Activated CD4-positive, alpha-beta T cell treated with anti-CD3 and anti-CD28 coated beads, Interleukin-2, amount 10 ng/mL, durations not matched to agents 24 days and 14 days (primary cell): ENCODE measurements at regions of chr1 and their contacts with region 1.

Region 1: DNA sequence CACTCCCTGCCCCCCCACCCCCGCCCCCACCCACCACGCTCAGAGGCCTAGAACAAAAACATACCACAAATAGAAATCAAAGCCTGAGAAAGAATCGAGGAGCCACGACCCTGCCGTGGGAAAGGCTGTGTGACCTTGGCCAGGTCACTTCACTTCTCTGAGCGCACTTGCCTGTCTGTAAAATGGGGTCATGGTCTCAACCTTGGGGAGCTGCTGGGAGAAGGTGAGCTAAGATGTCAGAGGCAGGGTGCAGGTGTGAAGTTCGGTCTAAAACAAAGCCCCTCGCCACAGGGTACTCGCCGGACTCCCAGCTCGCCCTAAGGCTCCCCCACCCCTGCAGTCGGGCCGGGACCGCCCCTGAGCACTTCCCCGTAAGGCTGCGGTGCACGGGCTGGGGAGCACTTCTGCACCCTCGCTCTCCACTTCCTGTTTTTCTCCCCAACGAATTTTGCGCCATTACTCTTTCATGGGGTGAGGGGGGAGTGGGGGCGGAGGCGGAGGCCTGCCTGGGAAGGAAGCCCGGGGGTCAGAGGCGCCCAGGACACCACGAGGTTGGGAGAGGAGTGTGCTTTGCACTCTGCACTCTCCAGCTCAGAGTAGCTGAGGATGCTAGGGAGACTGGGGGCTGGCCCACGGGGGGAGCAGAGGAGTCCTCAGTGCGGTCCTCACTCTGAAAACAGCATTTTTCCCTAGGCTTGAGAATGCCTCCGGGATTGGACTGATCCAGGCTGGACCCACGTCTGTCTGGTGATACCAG is 21.9 kb upstream of the PIK3CD start:
- DNase-seq: peak; percentile 95
- H3K4me3 Mint-ChIP-seq: peak overlapping the region; percentile 95
- H3K27ac Mint-ChIP-seq: peak overlapping the region; percentile 93
- H3K4me1 Mint-ChIP-seq: peaks cover 52% of the 10 kb centered on the region
- H3K27me3 Mint-ChIP-seq: no peaks in the 10 kb centered on the region

Region 2: DNA sequence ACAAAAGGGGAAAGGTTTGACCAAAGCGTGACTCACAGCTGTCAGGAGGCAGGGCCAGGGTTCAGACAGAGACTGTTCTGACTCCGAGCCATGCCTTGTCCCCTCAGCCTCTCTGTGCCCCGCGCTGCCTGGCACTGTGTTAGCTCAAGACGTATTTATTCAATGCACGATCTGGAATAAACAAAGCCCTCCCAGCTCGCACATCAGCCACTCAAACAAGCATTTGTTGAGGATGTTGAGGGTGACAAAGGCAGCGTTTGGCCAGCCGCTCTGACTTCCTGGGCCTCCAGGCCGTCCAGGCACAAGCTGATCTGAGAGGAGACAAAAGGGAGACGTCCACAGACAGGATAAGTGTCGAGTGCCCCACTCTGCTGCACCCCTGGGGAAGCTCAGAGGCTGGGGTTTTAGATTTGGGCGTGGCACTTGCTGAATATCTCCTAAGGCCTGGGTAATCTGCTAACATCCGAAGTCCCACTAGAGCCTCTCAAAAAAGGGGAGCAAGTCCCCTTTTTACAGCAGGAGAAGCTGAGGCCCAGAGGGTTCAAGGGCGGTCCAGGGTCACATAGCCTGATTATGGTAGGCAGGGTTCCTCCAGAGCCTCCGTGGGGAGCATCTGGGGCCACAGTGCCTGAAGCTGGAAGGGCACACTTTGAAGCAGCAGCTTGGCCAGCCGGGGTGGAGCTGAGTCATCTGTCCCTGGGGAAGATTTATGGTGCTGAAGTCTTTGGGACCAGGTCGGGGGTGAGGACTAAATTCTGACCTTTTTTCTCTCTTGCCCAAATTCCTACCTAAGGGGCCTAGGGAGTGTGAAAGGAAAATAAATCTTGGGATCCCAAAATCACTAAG is 241.1 kb before region 1 on chr1:
- intact Hi-C with region 1: no loop called
- DNase-seq: no peak
- H3K4me3 Mint-ChIP-seq: no peak overlapping the region
- H3K27ac Mint-ChIP-seq: no peak overlapping the region
- H3K4me1 Mint-ChIP-seq: peaks cover 11% of the 10 kb centered on the region
- H3K27me3 Mint-ChIP-seq: peaks cover 23% of the 10 kb centered on the region

Region 3: GRCh38 chr1:9606948-9607347 is 22.7 kb before region 1 on chr1:
- intact Hi-C with region 1: no loop called
- DNase-seq: no peak
- H3K4me3 Mint-ChIP-seq: no peak overlapping the region
- H3K27ac Mint-ChIP-seq: no peak overlapping the region
- H3K4me1 Mint-ChIP-seq: no peaks in the 10 kb centered on the region
- H3K27me3 Mint-ChIP-seq: no peaks in the 10 kb centered on the region

Region 4: GRCh38 chr1:9651565-9652378 is 22.1 kb after region 1 on chr1 and contains the start of gene PIK3CD:
- intact Hi-C with region 1: loop called (anchors 1 kb)
- DNase-seq: peak; percentile 84
- H3K4me3 Mint-ChIP-seq: peak within 1 kb of the TSS; percentile 98
- H3K27ac Mint-ChIP-seq: peak within 1 kb of the TSS; percentile 99
- H3K4me1 Mint-ChIP-seq: peaks cover 46% of the 10 kb centered on the region
- H3K27me3 Mint-ChIP-seq: no peaks in the 10 kb centered on the region
- total RNA-seq, gene PIK3CD: 233 TPM in 2 replicates

Region 5: GRCh38 chr1:9689011-9689706 is 59.5 kb after region 1 on chr1:
- intact Hi-C with region 1: loop called (anchors 2 kb)
- DNase-seq: peak; percentile 94
- H3K4me3 Mint-ChIP-seq: peak overlapping the region; percentile 78
- H3K27ac Mint-ChIP-seq: no peak overlapping the region
- H3K4me1 Mint-ChIP-seq: peaks cover 64% of the 10 kb centered on the region
- H3K27me3 Mint-ChIP-seq: no peaks in the 10 kb centered on the region

Region 6: GRCh38 chr1:9724706-9725476 is 95.3 kb after region 1 on chr1:
- intact Hi-C with region 1: loop called (anchors 1 kb)
- DNase-seq: peak; percentile 91
- H3K4me3 Mint-ChIP-seq: peak overlapping the region; percentile 23
- H3K27ac Mint-ChIP-seq: peak overlapping the region; percentile 56
- H3K4me1 Mint-ChIP-seq: peaks cover 46% of the 10 kb centered on the region
- H3K27me3 Mint-ChIP-seq: no peaks in the 10 kb centered on the region

Region 7: DNA sequence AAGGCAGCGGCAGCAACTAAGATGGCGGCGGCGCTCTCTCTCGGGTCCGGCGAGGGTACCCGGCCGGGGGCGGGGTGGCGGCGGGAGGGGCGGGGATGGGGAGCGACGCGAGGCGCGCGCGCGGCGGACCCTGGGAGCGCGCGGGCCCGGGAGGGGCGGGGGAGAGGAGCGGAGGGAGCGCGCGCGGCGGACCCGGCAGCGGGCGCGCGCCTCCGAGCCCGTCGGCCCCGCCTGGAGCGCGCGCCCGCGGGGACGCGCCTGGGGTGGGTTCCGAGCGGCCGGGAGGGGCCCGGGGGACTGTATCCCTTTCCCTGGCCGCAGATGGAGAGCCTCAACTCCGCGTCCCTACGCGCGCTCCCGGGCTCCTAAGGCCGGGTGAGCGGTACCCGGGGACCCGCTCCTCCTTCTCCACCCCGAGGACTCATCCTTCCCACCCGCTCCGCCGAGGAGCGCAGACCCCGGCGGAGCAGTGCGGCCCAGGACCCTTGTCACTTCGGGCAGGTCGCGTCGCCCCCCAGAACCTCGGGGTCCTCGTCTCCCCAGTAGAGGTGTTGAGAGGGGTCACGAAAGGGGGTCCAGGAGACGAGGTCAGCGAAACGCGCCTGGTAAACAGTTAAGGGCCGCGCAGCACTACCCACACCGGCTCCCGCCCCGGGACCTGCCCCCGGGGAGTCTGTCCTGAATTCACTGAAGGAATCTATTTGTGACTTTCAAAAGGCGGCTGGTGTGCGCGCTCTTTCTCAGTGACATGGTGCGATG is 194.5 kb after region 1 on chr1 and contains the start of gene CLSTN1:
- intact Hi-C with region 1: loop called (anchors 2 kb)
- DNase-seq: peak; percentile 96
- H3K4me3 Mint-ChIP-seq: peak within 1 kb of the TSS; percentile 92
- H3K27ac Mint-ChIP-seq: peak within 1 kb of the TSS; percentile 82
- H3K4me1 Mint-ChIP-seq: peaks cover 35% of the 10 kb centered on the region
- H3K27me3 Mint-ChIP-seq: peaks cover 6% of the 10 kb centered on the region
- total RNA-seq, gene CLSTN1: 42.1 and 43.8 TPM in 2 replicates

Region 8: GRCh38 chr1:10032590-10033358 is 403.2 kb after region 1 on chr1 and contains the start of gene UBE4B:
- intact Hi-C with region 1: loop called (anchors 2 kb)
- DNase-seq: peak; percentile 100
- H3K4me3 Mint-ChIP-seq: peak within 1 kb of the TSS; percentile 85
- H3K27ac Mint-ChIP-seq: peak within 1 kb of the TSS; percentile 97
- H3K4me1 Mint-ChIP-seq: peaks cover 20% of the 10 kb centered on the region
- H3K27me3 Mint-ChIP-seq: no peaks in the 10 kb centered on the region
- total RNA-seq, gene UBE4B: 29.9 and 31.1 TPM in 2 replicates